Activated B cell treated with CpG ODN at 0.5 μM for 24 hours (primary cell): ENCODE measurements at regions of chr9 and their contacts with region 1.

Region 1: GRCh38 chr9:77456829-77457437 is 191.2 kb downstream of the GNA14 start:
- DNase-seq: peak; percentile 59
- ATAC-seq: peak; percentile 85
- H3K4me3 Mint-ChIP-seq: no peak overlapping the region
- H3K27ac Mint-ChIP-seq: no peak overlapping the region
- H3K4me1 Mint-ChIP-seq: peaks cover 6% of the 10 kb centered on the region
- H3K27me3 Mint-ChIP-seq: peaks cover 4% of the 10 kb centered on the region
- CTCF ChIP-seq: no peak

Region 2: DNA sequence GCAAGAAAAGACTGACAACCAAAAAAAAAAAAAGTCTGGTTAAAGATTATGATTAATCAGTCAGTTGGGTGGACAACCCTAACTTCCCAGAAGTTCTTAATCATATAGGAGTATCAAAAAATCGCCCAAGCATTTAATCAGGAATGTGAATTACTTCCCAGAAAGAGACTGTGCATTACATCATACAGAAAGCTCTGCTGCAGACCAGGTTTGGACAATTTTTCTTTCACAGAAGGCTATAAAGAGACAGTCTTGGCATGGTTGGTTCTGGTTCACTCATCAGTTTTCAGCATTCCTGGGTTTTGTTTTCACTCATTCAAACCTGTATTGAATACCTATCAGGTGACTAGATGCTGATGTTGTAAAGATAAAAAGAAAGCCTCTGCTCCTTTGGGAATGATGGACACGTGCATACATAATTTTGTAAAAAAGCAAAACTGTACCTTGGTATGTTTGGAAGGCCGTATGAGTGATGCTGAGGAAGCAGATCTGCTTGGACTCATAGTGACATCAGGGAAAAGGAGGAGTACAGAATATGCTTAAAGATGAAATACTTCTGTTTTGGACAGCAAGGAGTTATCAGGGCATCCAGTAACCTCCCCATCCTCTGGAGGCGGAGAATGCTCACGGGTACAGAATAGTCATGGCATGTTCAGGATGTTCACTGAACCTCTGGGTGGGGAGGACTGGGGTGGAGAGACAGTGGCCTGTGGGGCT is 12.7 kb after region 1 on chr9:
- CTCF ChIA-PET with region 1: interaction called, 18 read pairs
- POLR2A ChIA-PET with region 1: no interaction called
- intact Hi-C with region 1: no loop called
- DNase-seq: no peak
- ATAC-seq: no peak
- H3K4me3 Mint-ChIP-seq: no peak overlapping the region
- H3K27ac Mint-ChIP-seq: no peak overlapping the region
- H3K4me1 Mint-ChIP-seq: no peaks in the 10 kb centered on the region
- H3K27me3 Mint-ChIP-seq: peaks cover under 1% of the 10 kb centered on the region
- CTCF ChIP-seq: no peak

Region 3: GRCh38 chr9:77751341-77752091 is 294.6 kb after region 1 on chr9:
- CTCF ChIA-PET with region 1: interaction called, 11 read pairs
- POLR2A ChIA-PET with region 1: no interaction called
- intact Hi-C with region 1: loop called (anchors 5 kb)
- DNase-seq: no peak
- ATAC-seq: no peak
- H3K4me3 Mint-ChIP-seq: no peak overlapping the region
- H3K27ac Mint-ChIP-seq: no peak overlapping the region
- H3K4me1 Mint-ChIP-seq: no peaks in the 10 kb centered on the region
- H3K27me3 Mint-ChIP-seq: no peaks in the 10 kb centered on the region
- CTCF ChIP-seq: no peak

Region 4: DNA sequence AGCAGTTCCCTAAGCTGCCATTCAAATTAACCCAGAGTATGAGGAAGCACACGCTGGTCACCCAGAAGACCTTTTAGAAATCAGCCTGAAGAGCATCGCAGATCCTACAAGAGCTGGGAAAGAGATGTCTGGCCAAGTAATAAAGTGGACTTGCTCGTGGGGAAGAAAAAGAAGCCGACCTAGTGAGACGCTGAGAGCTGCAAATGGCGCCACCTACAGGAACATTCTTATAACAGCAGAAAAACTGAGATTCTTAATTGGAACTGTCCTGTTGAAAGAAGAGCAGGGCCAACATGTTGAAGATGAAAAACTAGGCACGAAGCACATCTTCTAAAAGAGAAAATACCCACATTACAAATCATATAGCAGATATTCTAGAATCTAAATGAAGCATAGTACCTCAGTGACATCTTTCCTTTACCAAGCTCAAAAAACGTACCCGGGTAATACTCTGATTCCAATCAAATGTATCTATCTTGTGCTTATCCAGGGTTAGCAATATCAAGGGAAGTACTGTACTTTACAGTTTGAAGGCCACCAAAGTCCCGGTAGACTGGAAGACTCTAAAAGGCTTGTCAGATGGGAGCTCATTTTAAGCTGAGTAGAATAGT is 578.6 kb after region 1 on chr9:
- CTCF ChIA-PET with region 1: interaction called, 5 read pairs
- POLR2A ChIA-PET with region 1: no interaction called
- intact Hi-C with region 1: loop called (anchors 1 kb)
- DNase-seq: no peak
- ATAC-seq: no peak
- H3K4me3 Mint-ChIP-seq: no peak overlapping the region
- H3K27ac Mint-ChIP-seq: no peak overlapping the region
- H3K4me1 Mint-ChIP-seq: peaks cover 17% of the 10 kb centered on the region
- H3K27me3 Mint-ChIP-seq: peaks cover 45% of the 10 kb centered on the region
- CTCF ChIP-seq: no peak

Region 5: DNA sequence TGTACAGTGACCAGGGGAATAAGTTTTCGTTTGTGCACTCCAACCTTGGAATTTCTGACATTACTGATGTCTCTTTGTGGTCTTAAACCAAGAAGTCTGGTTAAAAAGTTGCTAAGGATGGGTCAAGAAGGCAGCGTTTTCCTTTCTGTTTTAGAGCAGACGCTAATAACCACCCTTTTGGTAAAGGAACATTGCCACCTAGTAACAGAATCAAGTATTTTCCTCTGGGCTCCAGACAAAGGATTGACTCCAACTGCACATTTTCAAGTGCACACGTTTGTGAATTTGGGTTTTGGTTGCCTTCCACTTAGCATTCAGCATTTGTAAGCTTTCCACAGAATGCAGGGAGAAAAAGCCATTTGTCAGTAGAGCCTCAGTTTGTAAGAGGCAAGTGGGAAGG is 756.8 kb after region 1 on chr9:
- CTCF ChIA-PET with region 1: no interaction called
- POLR2A ChIA-PET with region 1: no interaction called
- intact Hi-C with region 1: loop called (anchors 5 kb)
- DNase-seq: no peak
- ATAC-seq: no peak
- H3K4me3 Mint-ChIP-seq: no peak overlapping the region
- H3K27ac Mint-ChIP-seq: no peak overlapping the region
- H3K4me1 Mint-ChIP-seq: peaks cover 19% of the 10 kb centered on the region
- H3K27me3 Mint-ChIP-seq: no peaks in the 10 kb centered on the region
- CTCF ChIP-seq: no peak